ENCODE measurements at regions of chr14 and their contacts with region 1.

Region 1: DNA sequence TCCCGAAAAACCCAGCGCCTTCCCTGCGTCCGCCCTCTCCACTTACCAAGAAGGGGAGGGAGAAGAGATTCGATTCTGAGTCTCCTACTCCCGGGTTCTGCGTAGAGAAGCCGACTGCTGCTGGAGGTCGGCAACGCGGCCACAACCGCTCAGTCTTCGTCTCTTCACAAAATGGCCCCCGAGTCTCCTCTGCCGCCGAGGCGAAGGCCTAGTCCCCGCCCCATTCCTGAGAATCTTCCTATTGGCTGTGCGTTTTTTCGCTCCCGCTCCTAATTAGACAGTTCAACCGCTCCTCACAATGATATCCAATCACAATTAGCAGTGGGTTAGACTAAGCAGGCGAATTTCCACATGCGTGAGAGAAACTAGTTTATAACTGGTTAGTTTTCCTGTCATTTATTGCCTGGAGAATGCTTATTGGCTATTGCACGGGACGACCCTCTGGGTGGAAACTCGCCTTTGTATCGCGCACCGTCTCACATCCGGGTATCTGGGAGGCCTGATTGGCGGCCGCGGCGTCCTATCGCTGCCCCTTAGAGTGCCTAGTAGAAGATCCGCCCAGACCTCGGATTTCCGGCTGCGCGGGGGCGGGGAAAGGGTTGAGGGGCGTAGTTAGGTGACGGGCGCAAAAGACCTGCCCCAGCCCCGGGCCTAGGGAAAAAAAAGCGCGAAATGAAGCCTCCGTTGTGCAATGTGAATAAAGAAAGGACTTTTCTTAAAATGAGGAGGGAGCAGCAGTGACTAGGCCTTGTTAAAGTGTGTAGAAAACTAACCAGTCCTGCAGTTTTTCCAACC is at the start of gene HNRNPC:
- DNase-seq: peak; percentile 99 to 100
- ATAC-seq: peak; percentile 97 to 99
- H3K4me3 ChIP-seq: peak within 1 kb of the TSS; percentile 69 to 95 (median 81)
- H3K27ac ChIP-seq: peak within 1 kb of the TSS; percentile 92 to 99 (median 95)
- H3K4me1 ChIP-seq: peaks cover 34 to 38% of the 10 kb centered on the region in 2 donors
- H3K27me3 ChIP-seq: no peaks in the 10 kb centered on the region
- CTCF ChIP-seq: no peak
- POLR2A ChIP-seq: peak; percentile 95 to 96
- total RNA-seq, gene HNRNPC: 281 to 357 (median 318) TPM

Region 2: DNA sequence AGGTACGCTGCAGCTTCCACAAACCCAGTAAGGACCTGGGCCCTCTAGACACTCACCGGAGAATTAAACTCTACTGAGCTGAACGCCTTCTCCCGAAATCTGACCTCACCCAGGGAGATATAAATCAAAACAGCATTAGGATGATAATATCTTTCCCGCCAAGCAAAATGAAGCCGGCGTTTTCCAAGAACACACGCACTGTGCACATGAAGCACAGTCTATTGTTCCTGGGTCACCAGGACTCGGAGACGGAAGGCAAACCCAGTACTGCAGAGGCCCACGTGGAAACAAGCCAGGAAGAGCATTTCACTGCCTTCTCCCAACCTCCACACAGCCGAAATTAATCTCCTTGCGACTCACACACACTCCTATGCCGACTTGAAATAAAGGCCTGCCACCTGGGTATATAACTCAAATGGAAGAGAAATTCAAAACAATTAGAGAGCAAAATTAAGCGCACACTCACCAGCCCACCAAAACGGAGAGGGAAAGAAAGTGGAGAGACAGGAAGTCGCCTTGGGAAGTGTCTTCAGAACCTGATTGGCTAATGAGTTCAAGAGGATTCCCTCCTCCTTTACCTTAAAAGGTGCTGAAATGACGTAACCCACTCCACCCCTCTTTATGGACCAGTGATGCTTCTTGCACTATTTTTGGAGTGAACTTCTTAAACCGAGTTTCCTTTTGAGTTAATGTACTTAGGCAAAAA is 936.5 kb before region 1 on chr14 and contains the start of gene CCNB1IP1:
- in situ Hi-C with region 1: no loop called
- intact Hi-C with region 1: loop called (anchors 5 kb)
- DNase-seq: peak; percentile 62 to 68
- ATAC-seq: peak; percentile 100
- H3K4me3 ChIP-seq: peak within 1 kb of the TSS; percentile 61 to 77 (median 70)
- H3K27ac ChIP-seq: peak within 1 kb of the TSS; percentile 85 to 91 (median 88)
- H3K4me1 ChIP-seq: peaks cover 10 to 16% of the 10 kb centered on the region in 2 donors
- H3K27me3 ChIP-seq: no peaks in the 10 kb centered on the region
- CTCF ChIP-seq: no peak
- POLR2A ChIP-seq: peak; percentile 62 to 63
- total RNA-seq, gene CCNB1IP1: 15.7 to 42.9 (median 30.2) TPM

Region 3: GRCh38 chr14:20907214-20907613 is 362.2 kb before region 1 on chr14:
- in situ Hi-C with region 1: no loop called
- intact Hi-C with region 1: no loop called
- DNase-seq: no peak
- ATAC-seq: no peak
- H3K4me3 ChIP-seq: no peak overlapping the region
- H3K27ac ChIP-seq: no peak overlapping the region
- H3K4me1 ChIP-seq: no peaks in the 10 kb centered on the region
- H3K27me3 ChIP-seq: no peaks in the 10 kb centered on the region
- CTCF ChIP-seq: no peak
- POLR2A ChIP-seq: no peak

Region 4: DNA sequence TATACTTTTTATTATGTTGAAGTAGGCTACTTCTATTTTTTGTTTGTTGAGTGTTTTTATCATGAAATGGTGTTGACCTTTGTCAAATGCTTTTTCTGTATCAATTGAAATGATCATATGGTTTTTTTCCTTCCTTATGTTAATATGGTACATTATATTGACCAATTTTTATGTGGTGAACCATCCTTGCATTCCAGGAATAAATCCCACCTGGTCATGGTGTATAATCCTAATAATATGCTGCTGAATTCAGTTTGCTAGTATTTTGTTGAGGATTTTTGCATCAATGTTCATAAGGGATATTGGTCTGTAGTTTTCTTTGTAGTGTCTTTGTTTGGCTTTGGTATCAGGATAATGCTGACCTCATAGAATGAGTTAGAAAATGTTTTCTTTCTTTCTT is 124.0 kb before region 1 on chr14:
- in situ Hi-C with region 1: no loop called
- intact Hi-C with region 1: no loop called
- DNase-seq: no peak
- ATAC-seq: no peak
- H3K4me3 ChIP-seq: no peak overlapping the region
- H3K27ac ChIP-seq: no peak overlapping the region
- H3K4me1 ChIP-seq: no peaks in the 10 kb centered on the region
- H3K27me3 ChIP-seq: peaks cover 0 to 4% (median 0%) of the 10 kb centered on the region in 3 donors
- CTCF ChIP-seq: no peak
- POLR2A ChIP-seq: no peak

Region 5: DNA sequence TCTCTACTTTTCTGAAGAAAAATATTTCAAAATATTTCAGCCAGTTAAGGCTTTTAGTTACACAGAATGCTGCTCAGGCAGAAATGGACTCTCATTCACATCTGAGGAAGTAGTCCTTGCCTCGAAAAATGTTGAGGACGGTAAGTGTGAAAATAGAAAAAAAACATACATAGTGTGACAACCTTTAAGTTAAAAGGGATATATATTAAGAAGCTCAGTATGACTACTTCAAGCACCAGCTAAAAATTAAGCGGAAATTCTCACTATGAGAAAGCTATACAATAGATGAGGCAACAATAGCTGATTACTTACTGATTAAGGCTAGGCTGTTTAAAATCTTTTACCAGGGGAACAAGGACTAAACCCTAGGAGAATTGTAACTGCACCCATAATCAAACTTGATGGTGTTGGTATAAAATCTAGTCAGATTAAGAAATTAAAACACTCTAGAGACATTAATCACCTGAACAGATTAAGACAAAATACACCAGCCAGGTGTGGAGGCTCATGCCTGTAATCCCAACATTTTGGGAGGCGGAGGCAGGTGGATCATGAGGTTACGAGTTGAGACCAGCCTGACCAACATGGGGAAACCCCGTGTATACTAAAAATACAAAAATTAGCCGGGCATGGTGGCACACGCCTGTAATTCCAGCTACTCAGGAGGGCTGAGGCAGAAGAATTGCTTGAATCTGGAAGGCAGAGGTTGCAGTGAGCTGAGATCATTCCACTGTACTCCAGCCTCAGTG is 54.1 kb before region 1 on chr14:
- in situ Hi-C with region 1: no loop called
- intact Hi-C with region 1: no loop called
- DNase-seq: no peak
- ATAC-seq: no peak
- H3K4me3 ChIP-seq: no peak overlapping the region
- H3K27ac ChIP-seq: peak overlapping the region in 1 of 4 donors; percentile 13
- H3K4me1 ChIP-seq: peaks cover 21 to 29% of the 10 kb centered on the region in 2 donors
- H3K27me3 ChIP-seq: no peaks in the 10 kb centered on the region
- CTCF ChIP-seq: no peak
- POLR2A ChIP-seq: no peak

Region 6: GRCh38 chr14:21227981-21228380 is 41.5 kb before region 1 on chr14:
- in situ Hi-C with region 1: no loop called
- intact Hi-C with region 1: loop called (anchors 2 kb)
- DNase-seq: no peak
- ATAC-seq: no peak
- H3K4me3 ChIP-seq: no peak overlapping the region
- H3K27ac ChIP-seq: no peak overlapping the region
- H3K4me1 ChIP-seq: peaks cover 28 to 42% of the 10 kb centered on the region in 2 donors
- H3K27me3 ChIP-seq: no peaks in the 10 kb centered on the region
- CTCF ChIP-seq: no peak
- POLR2A ChIP-seq: no peak

Region 7: GRCh38 chr14:21476925-21477681 is 207.7 kb after region 1 on chr14 and contains the starts of genes RAB2B and TOX4:
- in situ Hi-C with region 1: no loop called
- intact Hi-C with region 1: loop called (anchors 5 kb)
- DNase-seq: peak; percentile 97 to 98
- ATAC-seq: peak; percentile 98 to 99
- H3K4me3 ChIP-seq: peak within 1 kb of the TSS; percentile 66 to 90 (median 80)
- H3K27ac ChIP-seq: peak within 1 kb of the TSS; percentile 83 to 89 (median 87)
- H3K4me1 ChIP-seq: peaks cover 19 to 20% of the 10 kb centered on the region in 2 donors
- H3K27me3 ChIP-seq: no peaks in the 10 kb centered on the region
- CTCF ChIP-seq: peak; percentile 90 to 100 (median 99)
- POLR2A ChIP-seq: peak; percentile 68 to 87
- total RNA-seq, gene RAB2B: 4.8 to 13.6 (median 8.0) TPM
- total RNA-seq, gene TOX4: 57.2 to 135 (median 112) TPM

Region 8: DNA sequence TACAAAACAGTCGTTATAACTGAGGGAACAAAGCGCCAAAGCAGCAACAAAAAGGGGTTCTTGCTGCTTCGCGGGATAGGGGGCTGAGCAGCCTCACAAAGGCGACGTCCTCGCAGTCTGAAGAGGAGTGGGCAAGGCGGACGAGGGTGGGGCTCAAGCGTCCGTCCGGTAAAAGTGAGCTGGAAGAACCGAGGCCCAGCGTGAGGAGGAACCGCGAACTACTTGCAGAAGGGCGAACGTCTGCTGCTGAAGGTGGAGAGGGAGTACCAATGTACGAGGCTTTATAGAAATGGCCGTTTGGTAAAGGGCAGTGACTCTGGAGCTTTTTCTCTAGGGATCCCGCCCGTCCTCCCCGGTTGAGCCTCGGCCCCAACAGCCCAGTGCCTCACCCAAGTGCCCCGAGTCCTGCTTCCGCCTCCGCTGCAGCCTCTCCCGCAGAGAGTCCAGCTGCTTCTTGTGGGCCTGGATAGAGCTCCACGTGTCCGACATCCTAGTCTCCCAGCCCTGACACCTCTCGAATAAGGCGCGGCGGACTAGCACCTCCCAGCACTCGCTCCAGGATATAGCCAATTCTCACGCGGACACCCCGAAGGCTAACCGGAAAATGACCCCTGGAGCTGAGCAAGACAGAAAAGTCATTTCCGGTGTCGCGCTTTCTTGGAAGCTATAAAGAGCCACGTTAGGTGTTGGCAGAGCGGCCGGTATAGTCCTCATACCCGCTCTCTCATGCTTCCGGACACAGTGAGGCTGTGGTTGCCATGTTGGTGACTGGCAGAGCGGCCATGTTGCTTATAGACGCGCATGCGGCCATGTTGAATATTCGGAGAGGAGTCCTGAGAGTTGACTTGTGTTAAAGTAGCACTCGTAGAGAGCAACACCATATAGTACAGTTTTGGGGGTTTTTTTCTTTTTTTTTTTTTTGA is 241.5 kb after region 1 on chr14 and contains the start of gene METTL3:
- in situ Hi-C with region 1: no loop called
- intact Hi-C with region 1: loop called (anchors 10 kb)
- DNase-seq: peak; percentile 98 to 99
- ATAC-seq: peak; percentile 99 to 100
- H3K4me3 ChIP-seq: peak within 1 kb of the TSS; percentile 73 to 96 (median 87)
- H3K27ac ChIP-seq: peak within 1 kb of the TSS; percentile 89 to 96 (median 91)
- H3K4me1 ChIP-seq: peaks cover 16 to 17% of the 10 kb centered on the region in 2 donors
- H3K27me3 ChIP-seq: no peaks in the 10 kb centered on the region
- CTCF ChIP-seq: no peak
- POLR2A ChIP-seq: peak; percentile 52 to 63
- total RNA-seq, gene METTL3: 16.5 to 52.4 (median 34.6) TPM